Motor neuron (in vitro differentiated cells): ENCODE measurements at regions of chr5 and their contacts with region 1.

Region 1: GRCh38 chr5:108260117-108260857 is 121.6 kb downstream of the FBXL17 start:
- ATAC-seq: peak; percentile 78 to 100 (median 94)
- H3K4me3 ChIP-seq: no peak overlapping the region
- H3K27ac ChIP-seq: no peak overlapping the region
- H3K4me1 ChIP-seq: peaks cover 15 to 16% of the 10 kb centered on the region in 2 donors

Region 2: GRCh38 chr5:108079753-108080152 is 180.5 kb before region 1 on chr5:
- in situ Hi-C with region 1: no loop called
- ATAC-seq: peak in 6 of 8 experiments; percentile 10 to 46 (median 44)
- H3K4me3 ChIP-seq: no peak overlapping the region
- H3K27ac ChIP-seq: no peak overlapping the region
- H3K4me1 ChIP-seq: peaks cover 2 to 3% of the 10 kb centered on the region in 2 donors

Region 3: DNA sequence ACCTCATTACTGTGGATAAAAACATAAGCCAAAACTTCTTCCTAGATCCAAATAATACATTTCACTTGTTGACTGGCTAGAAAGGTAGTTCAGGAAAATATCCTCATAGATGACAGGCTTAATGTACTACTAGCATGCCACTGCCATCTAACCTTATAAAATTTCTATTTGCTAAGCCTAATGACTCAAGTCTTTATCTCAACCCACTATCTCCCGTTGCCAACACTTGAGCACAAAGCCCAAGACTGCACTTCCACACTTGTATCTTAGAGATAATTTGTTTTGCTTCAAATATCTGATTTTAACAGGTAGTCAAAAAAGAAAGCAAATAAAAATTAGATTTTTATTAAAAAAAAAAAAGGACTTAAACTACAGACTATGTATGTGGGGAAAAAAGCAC is 78.9 kb after region 1 on chr5:
- in situ Hi-C with region 1: loop called in 1 of 9 experiments (anchors 5 kb)
- ATAC-seq: no peak
- H3K4me3 ChIP-seq: no peak overlapping the region
- H3K27ac ChIP-seq: no peak overlapping the region
- H3K4me1 ChIP-seq: no peaks in the 10 kb centered on the region